ENCODE measurements at regions of chr10 and their contacts with region 1.

Region 1: GRCh38 chr10:50417886-50418830 is 166.8 kb upstream of the ASAH2 start:
- DNase-seq: no peak
- H3K4me3 ChIP-seq: peak overlapping the region; percentile 70
- CTCF ChIP-seq: peak; percentile 0

Region 2: DNA sequence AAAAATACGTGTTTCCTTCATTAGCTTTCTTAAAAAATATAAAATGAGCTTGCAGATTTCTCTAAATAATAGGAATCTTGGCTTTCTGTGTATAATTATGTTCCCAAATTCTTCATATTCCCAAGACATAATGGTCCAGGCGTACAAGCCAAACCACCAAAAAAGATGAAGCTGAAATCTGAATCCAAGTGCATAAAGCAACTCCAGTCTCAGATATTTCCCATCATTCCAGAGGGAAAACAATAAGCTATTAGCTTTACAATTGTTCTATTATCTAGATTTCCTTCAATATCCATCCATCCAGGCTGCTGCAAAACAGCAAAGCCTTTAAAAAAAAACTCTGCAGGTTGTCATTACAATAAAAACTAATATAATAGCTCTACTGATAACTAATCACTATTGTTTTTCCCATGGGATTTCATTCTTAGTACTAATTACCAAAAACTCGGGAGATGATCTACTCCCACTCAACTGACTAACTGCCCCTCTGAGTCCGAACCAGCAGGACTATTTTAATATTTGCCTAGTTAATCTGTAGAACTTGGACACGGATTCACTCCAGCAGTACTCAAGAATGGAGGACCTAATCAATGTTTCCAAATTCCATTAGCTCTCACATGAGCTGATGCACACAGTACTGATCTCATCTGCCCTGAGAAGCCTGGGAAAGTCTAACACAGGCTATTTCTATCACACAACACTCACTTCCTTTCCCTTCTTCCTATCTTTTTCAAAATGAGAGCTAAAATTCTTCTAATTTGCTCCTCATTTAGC is 57.9 kb before region 1 on chr10:
- CTCF ChIA-PET with region 1: no interaction called
- POLR2A ChIA-PET with region 1: no interaction called
- DNase-seq: no peak
- H3K4me3 ChIP-seq: no peak overlapping the region
- CTCF ChIP-seq: no peak

Region 3: DNA sequence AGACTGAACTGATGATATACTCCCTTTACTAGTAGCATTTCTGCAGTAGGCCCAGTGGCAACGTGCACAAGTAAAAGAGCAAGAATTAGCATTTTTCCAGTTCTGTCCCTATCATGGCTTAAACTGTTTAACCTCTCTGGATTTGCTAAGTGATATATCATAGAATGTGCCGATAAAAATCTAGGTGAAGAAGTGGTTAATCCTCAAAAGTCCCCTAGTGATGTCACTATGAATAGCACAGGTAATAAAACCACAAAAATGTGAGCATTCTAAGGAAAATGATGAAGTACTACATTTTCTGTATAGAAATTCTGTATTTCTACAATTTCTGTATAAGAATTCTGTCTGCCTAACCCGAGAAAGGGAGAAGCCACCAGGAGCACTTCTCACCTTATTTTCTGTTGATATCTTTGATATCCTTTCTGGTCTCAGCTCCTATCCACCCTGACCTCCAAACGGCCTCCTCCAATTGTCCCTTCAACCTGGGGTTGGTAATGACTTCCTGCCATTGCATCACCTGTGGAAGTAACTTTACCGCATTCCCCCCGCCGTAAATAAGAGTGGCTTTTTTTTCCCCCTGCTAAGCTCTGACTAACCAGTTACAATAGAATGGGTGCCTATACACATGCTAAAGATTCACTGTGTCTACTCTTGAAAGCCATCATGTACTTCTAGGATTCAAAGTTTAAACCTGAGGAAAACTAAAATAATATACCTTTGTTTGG is 10.9 kb before region 1 on chr10:
- CTCF ChIA-PET with region 1: interaction called, 20 read pairs
- POLR2A ChIA-PET with region 1: interaction called, 4 read pairs
- DNase-seq: no peak
- H3K4me3 ChIP-seq: no peak overlapping the region
- CTCF ChIP-seq: no peak

Region 4: DNA sequence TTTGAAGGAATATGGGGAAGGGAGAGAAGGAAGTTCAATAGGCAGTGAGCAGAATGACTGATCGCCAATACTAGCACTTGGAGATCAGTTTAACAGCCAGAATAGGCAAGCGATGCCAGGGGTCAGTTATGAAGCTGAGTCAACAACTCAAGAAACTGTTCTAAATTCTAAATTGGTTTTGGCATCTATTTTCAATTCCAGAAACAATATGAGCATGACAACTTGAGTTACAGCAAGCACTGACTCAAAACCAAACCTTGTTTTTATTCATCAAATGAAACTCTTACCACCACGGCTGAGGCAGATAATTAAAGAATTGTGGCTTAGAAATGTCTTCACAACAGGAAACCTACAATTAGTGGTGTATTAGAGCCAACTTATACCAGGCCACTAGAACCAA is 13.6 kb after region 1 on chr10:
- CTCF ChIA-PET with region 1: interaction called, 10 read pairs
- POLR2A ChIA-PET with region 1: interaction called, 3 read pairs
- DNase-seq: no peak
- H3K4me3 ChIP-seq: no peak overlapping the region
- CTCF ChIP-seq: no peak

Region 5: GRCh38 chr10:50624866-50625692 is 206.9 kb after region 1 on chr10:
- CTCF ChIA-PET with region 1: interaction called, 10 read pairs
- POLR2A ChIA-PET with region 1: interaction called, 8 read pairs
- DNase-seq: no peak
- H3K4me3 ChIP-seq: peak overlapping the region; percentile 83
- CTCF ChIP-seq: peak; percentile 74

Measured in AG04449 (cell line).